ENCODE measurements at regions of chr11 and their contacts with region 1.

Region 1: GRCh38 chr11:65652511-65653231 is 10.0 kb downstream of the RELA start:
- DNase-seq: peak; percentile 97
- H3K4me3 Mint-ChIP-seq: peak overlapping the region; percentile 77
- H3K27ac Mint-ChIP-seq: peak overlapping the region; percentile 93
- H3K4me1 Mint-ChIP-seq: peaks cover 51% of the 10 kb centered on the region
- H3K27me3 Mint-ChIP-seq: no peaks in the 10 kb centered on the region

Region 2: DNA sequence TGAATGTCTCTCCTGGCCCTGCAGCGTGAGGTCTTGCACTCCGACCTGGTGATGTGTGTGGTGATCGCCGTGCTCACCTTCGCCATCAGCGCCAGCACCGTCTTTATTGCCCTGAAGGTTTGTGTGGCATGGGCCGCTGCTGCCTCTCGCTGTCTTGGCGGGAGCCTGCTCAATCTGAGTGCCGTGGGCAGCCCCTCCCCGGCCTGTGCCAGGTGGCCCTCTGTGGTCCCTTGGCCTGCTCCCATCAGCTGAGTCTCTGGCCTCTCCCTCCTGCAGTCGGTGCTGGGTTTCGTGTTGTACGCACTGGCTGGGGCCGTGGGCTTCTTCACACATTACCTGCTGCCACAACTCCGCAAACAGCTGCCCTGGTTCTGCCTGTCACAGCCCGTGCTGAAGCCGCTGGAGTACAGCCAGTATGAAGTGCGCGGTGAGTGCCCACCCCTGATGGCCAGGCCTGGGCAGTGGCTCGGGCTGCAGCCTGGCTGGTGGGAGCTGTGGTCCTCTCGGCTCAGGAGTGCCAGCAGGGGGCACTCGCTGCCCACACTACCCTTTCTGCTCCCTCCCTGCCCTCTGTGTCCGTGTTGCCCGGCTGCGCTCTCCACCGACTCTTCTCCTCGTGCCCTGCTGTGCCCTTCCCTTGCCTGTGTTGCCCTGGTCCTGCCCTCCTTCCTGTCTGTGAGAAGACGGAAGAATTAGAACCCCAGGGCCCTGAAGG is 26.9 kb before region 1 on chr11:
- CTCF ChIA-PET with region 1: interaction called, 13 read pairs
- POLR2A ChIA-PET with region 1: interaction called, 3 read pairs
- intact Hi-C with region 1: no loop called
- DNase-seq: peak; percentile 67
- H3K4me3 Mint-ChIP-seq: no peak overlapping the region
- H3K27ac Mint-ChIP-seq: peak overlapping the region; percentile 34
- H3K4me1 Mint-ChIP-seq: peaks cover 2% of the 10 kb centered on the region
- H3K27me3 Mint-ChIP-seq: no peaks in the 10 kb centered on the region

Region 3: GRCh38 chr11:65662799-65663638 is 10.3 kb after region 1 on chr11 and contains the start of gene RELA:
- CTCF ChIA-PET with region 1: interaction called, 7 read pairs
- POLR2A ChIA-PET with region 1: interaction called, 28 read pairs
- intact Hi-C with region 1: loop called (anchors 1 kb)
- DNase-seq: peak; percentile 95
- H3K4me3 Mint-ChIP-seq: peak within 1 kb of the TSS; percentile 85
- H3K27ac Mint-ChIP-seq: peak within 1 kb of the TSS; percentile 95
- H3K4me1 Mint-ChIP-seq: peaks cover 38% of the 10 kb centered on the region
- H3K27me3 Mint-ChIP-seq: no peaks in the 10 kb centered on the region
- total RNA-seq, gene RELA: 74.9 to 76.5 TPM